ENCODE measurements at regions of chr10 and their contacts with region 1.

Region 1: GRCh38 chr10:76922666-76923065 is 714.9 kb downstream of the KCNMA1 start:
- DNase-seq: no peak
- ATAC-seq: peak; percentile 50
- H3K4me3 ChIP-seq: no peak overlapping the region
- H3K27ac ChIP-seq: no peak overlapping the region
- H3K4me1 ChIP-seq: no peaks in the 10 kb centered on the region
- H3K27me3 ChIP-seq: no peaks in the 10 kb centered on the region
- CTCF ChIP-seq: no peak

Region 2: GRCh38 chr10:76202777-76203176 is 719.9 kb before region 1 on chr10:
- CTCF ChIA-PET with region 1: no interaction called
- POLR2A ChIA-PET with region 1: no interaction called
- intact Hi-C with region 1: loop called (anchors 10 kb)
- DNase-seq: no peak
- ATAC-seq: no peak
- H3K4me3 ChIP-seq: no peak overlapping the region
- H3K27ac ChIP-seq: no peak overlapping the region
- H3K4me1 ChIP-seq: peaks cover 7% of the 10 kb centered on the region
- H3K27me3 ChIP-seq: peaks cover 72% of the 10 kb centered on the region
- CTCF ChIP-seq: no peak

Region 3: DNA sequence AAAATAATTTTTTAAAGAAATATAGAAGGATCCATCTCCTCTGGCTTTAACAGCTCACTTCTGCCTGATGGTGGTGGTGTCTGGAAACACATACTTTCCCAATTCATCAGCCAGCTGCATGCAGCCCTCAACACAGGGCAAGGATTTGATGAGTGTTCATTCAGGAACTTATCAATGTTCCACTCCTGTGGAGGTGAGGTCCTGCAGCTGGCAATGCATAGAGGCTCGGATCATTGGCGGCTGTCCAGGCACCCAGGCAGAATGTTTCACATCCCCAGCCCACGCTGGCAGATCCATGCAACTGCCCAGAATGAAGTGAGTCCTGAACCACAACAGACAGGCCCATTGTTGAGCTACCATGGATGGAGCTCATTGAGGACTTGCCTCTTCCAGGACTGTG is 770.1 kb after region 1 on chr10:
- CTCF ChIA-PET with region 1: interaction called, 11 read pairs
- POLR2A ChIA-PET with region 1: no interaction called
- intact Hi-C with region 1: no loop called
- DNase-seq: peak; percentile 60
- ATAC-seq: peak; percentile 40
- H3K4me3 ChIP-seq: no peak overlapping the region
- H3K27ac ChIP-seq: no peak overlapping the region
- H3K4me1 ChIP-seq: no peaks in the 10 kb centered on the region
- H3K27me3 ChIP-seq: peaks cover 34% of the 10 kb centered on the region
- CTCF ChIP-seq: no peak

Measured in PC-3 (cell line).